ENCODE measurements at regions of chr16 and their contacts with region 1.

Region 1: GRCh38 chr16:68144008-68144407 is 58.8 kb downstream of the NFATC3 start:
- DNase-seq: no peak
- ATAC-seq: no peak
- H3K4me3 ChIP-seq: no peak overlapping the region
- H3K4me3 Mint-ChIP-seq: no peak overlapping the region
- H3K27ac ChIP-seq: no peak overlapping the region
- H3K27ac Mint-ChIP-seq: peak overlapping the region in 3 of 9 donors; percentile 1 to 48 (median 5)
- H3K4me1 ChIP-seq: peaks cover 8 to 10% of the 10 kb centered on the region in 2 donors
- H3K4me1 Mint-ChIP-seq: peaks cover 35 to 68% (median 52%) of the 10 kb centered on the region in 7 donors
- H3K27me3 ChIP-seq: no peaks in the 10 kb centered on the region
- H3K27me3 Mint-ChIP-seq: no peaks in the 10 kb centered on the region

Region 2: GRCh38 chr16:68179196-68179795 is 35.3 kb after region 1 on chr16:
- CTCF ChIA-PET with region 1: no interaction called
- POLR2A ChIA-PET with region 1: no interaction called
- intact Hi-C with region 1: loop called in 1 of 2 experiments (anchors 5 kb)
- DNase-seq: no peak
- ATAC-seq: no peak
- H3K4me3 ChIP-seq: no peak overlapping the region
- H3K4me3 Mint-ChIP-seq: no peak overlapping the region
- H3K27ac ChIP-seq: no peak overlapping the region
- H3K27ac Mint-ChIP-seq: peak overlapping the region in 8 of 9 donors; percentile 19 to 78 (median 57)
- H3K4me1 ChIP-seq: no peaks in the 10 kb centered on the region
- H3K4me1 Mint-ChIP-seq: peaks cover 4 to 35% (median 18%) of the 10 kb centered on the region in 7 donors
- H3K27me3 ChIP-seq: no peaks in the 10 kb centered on the region
- H3K27me3 Mint-ChIP-seq: no peaks in the 10 kb centered on the region

Region 3: DNA sequence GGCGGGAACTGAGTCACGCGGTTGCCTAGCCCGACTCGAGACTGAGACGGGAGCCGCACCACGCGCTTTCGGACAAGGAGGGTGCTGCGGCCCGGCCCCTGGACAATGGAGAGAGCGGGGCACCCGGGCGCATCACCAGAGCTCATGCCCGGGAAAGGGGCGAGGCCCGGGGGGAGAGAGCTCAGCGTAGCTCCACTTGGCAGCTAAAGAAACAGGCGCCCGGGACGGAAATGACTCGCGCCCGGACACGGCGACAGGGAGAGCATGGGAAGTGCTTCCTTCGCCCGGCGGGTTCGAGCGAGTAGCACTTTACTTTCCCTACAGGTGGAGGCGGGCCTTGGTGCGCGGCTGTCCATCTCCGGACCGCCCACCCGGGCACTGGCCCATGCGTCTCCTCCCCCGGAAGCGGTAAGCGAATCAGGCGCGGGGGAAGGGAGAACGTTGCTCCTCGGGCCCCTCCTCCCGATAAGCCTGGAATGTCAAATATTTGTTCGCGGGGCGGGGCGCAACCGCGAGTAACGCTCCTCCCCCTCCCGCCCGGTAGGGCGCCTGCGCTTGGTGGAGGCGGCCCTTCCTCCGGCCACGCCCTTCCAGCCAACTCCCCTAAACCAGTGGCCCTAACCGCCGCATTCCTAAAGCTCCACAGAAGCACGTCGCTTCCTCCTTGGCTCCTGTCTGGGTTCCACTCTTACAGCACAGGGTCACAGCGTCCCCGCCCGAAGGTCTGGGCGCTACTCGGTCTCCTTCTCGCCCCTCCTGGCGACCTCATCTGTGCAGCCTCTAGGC is 93.4 kb after region 1 on chr16:
- CTCF ChIA-PET with region 1: no interaction called
- POLR2A ChIA-PET with region 1: no interaction called
- intact Hi-C with region 1: no loop called
- DNase-seq: peak; percentile 71 to 90 (median 83)
- ATAC-seq: peak; percentile 88
- H3K4me3 ChIP-seq: peak overlapping the region; percentile 91
- H3K4me3 Mint-ChIP-seq: peak overlapping the region; percentile 90 to 99 (median 96)
- H3K27ac ChIP-seq: peak overlapping the region; percentile 67
- H3K27ac Mint-ChIP-seq: peak overlapping the region; percentile 72 to 95 (median 87)
- H3K4me1 ChIP-seq: peaks cover 6 to 10% of the 10 kb centered on the region in 2 donors
- H3K4me1 Mint-ChIP-seq: peaks cover 23 to 45% (median 34%) of the 10 kb centered on the region in 7 donors
- H3K27me3 ChIP-seq: no peaks in the 10 kb centered on the region
- H3K27me3 Mint-ChIP-seq: peaks cover 0 to 13% (median 0%) of the 10 kb centered on the region in 5 donors

Measured in naive thymus-derived CD4-positive, alpha-beta T cell (primary cell).